Stomach (tissue), 19 donors: ENCODE measurements at regions of chr5 and their contacts with region 1.

Region 1: GRCh38 chr5:154179846-154180710 is 10.5 kb upstream of the GALNT10 start:
- DNase-seq: peak in 1 of 2 donors; percentile 81
- H3K4me3 ChIP-seq: no peak overlapping the region
- H3K27ac ChIP-seq: no peak overlapping the region
- H3K4me1 ChIP-seq: peaks cover 0 to 4% (median 2%) of the 10 kb centered on the region in 4 donors
- H3K27me3 ChIP-seq: no peaks in the 10 kb centered on the region
- CTCF ChIP-seq: peak in 5 of 7 experiments; percentile 71 to 81 (median 73)
- EP300 ChIP-seq: no peak
- POLR2A ChIP-seq: no peak

Region 2: GRCh38 chr5:153974131-153974812 is 205.8 kb before region 1 on chr5:
- intact Hi-C with region 1: loop called (anchors 10 kb)
- DNase-seq: peak in 1 of 2 donors; percentile 72
- H3K4me3 ChIP-seq: no peak overlapping the region
- H3K27ac ChIP-seq: no peak overlapping the region
- H3K4me1 ChIP-seq: no peaks in the 10 kb centered on the region
- H3K27me3 ChIP-seq: peaks cover 0 to 7% (median 0%) of the 10 kb centered on the region in 3 donors
- CTCF ChIP-seq: peak in 5 of 7 experiments; percentile 47 to 63 (median 60)
- EP300 ChIP-seq: no peak
- POLR2A ChIP-seq: no peak

Region 3: GRCh38 chr5:154072414-154073171 is 107.5 kb before region 1 on chr5:
- intact Hi-C with region 1: loop called (anchors 5 kb)
- DNase-seq: peak; percentile 89 to 93
- H3K4me3 ChIP-seq: no peak overlapping the region
- H3K27ac ChIP-seq: no peak overlapping the region
- H3K4me1 ChIP-seq: peaks cover 4 to 19% (median 17%) of the 10 kb centered on the region in 4 donors
- H3K27me3 ChIP-seq: no peaks in the 10 kb centered on the region
- CTCF ChIP-seq: peak in 5 of 7 experiments; percentile 83 to 95 (median 88)
- EP300 ChIP-seq: no peak
- POLR2A ChIP-seq: no peak

Region 4: GRCh38 chr5:154403776-154404387 is 223.8 kb after region 1 on chr5:
- intact Hi-C with region 1: loop called (anchors 5 kb)
- DNase-seq: no peak
- H3K4me3 ChIP-seq: no peak overlapping the region
- H3K27ac ChIP-seq: peak overlapping the region in 1 of 5 donors; percentile 2
- H3K4me1 ChIP-seq: peaks cover 10 to 20% (median 12%) of the 10 kb centered on the region in 4 donors
- H3K27me3 ChIP-seq: no peaks in the 10 kb centered on the region
- CTCF ChIP-seq: no peak
- EP300 ChIP-seq: no peak
- POLR2A ChIP-seq: no peak